ENCODE measurements at regions of chr5 and their contacts with region 1.

Region 1: DNA sequence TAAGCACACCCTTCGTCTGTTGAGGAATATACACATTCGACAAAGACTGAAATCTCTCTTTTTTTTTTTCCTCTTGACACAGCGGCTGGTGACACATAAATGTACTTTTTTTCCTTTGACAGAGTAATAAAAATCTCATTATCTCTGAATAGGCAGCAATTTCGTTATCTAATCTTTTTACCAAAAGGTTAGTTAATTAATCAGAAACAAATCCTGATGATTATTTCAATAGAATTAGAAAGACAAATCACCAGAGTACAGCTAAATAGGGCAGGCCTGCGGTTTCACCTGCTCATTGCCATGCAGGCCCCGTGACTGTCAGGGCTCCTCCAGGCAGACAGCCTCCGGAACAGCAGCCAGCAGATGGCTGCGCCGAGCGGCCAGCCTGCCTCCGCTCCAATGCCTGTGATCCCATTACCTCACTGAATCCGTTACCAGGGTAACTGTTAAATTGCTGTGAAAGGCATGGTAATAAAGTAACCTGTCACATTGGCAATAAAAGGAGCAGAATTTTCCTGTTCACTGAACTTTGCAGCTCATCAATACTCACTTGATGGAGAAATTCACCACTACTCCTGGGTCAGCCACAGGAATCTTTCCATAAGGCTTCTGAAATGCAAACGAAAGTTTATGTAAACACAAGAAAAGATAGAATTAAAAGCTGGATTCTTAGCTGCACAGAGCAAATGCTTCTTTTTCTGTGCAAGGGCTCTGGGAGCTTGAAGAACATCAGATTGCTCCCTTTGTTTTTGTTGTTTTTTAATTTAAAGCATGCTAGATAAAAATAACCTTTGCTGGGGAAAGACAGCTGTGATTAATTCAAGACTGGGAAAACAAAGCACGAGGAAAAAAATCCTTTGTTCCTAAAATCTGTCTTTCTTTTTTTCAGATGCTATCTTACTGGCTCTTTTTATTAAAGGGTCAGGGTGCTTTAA is 666.4 kb upstream of the ZNF608 start:
- DNase-seq: peak; percentile 66
- H3K4me3 ChIP-seq: no peak overlapping the region; the same call in none of the 2 replicates
- H3K27ac ChIP-seq: no peak overlapping the region
- H3K27me3 ChIP-seq: no peaks in the 10 kb centered on the region
- CTCF ChIP-seq: peak; percentile 57

Region 2: GRCh38 chr5:125484742-125485641 is 72.2 kb after region 1 on chr5:
- CTCF ChIA-PET with region 1: no interaction called
- POLR2A ChIA-PET with region 1: interaction called, 16 read pairs
- DNase-seq: peak; percentile 96
- H3K4me3 ChIP-seq: no peak overlapping the region
- H3K27ac ChIP-seq: peak overlapping the region; percentile 63
- H3K27me3 ChIP-seq: no peaks in the 10 kb centered on the region
- CTCF ChIP-seq: no peak

Measured in AG04450 (cell line).